Upper lobe of right lung (tissue), 1 donor: ENCODE measurements at regions of chr2 and their contacts with region 1.

Region 1: DNA sequence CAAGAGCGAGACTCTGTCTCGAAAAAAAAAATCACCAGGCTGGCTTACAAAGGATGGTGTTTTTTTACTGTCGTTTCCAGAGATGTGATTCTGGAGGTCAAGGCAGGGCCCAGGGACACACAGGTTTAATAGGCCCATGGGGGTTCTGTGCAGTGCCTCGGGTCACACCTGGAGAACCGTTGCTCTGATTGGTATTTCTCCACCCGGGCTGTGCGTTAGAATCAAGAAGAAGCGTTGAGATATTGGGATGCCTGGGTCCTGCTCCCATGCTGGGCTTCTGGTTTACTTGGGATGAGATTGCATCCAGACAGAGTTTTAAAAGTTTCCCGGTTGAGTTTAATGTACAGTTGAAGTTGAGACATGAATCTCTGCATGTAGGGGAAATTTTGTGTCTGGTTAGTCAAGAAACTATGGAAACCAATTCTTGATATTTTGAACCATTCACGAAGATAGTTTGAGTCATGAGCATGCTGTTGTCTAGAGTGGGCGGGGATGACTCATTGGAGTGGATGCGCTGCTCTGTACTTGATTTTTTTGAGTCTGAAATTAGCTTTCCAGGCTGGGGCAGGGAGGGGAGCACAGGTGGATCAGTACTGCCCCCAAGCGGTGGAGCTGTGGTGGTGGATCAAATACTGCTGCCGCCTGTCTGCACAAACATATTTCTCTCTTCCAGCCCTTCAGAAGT is 50.1 kb downstream of the GREB1 start:
- DNase-seq: no peak
- ATAC-seq: peak; percentile 84
- H3K4me3 ChIP-seq: no peak overlapping the region
- H3K27ac ChIP-seq: no peak overlapping the region
- H3K4me1 ChIP-seq: no peaks in the 10 kb centered on the region
- H3K27me3 ChIP-seq: no peaks in the 10 kb centered on the region
- CTCF ChIP-seq: peak; percentile 80

Region 2: DNA sequence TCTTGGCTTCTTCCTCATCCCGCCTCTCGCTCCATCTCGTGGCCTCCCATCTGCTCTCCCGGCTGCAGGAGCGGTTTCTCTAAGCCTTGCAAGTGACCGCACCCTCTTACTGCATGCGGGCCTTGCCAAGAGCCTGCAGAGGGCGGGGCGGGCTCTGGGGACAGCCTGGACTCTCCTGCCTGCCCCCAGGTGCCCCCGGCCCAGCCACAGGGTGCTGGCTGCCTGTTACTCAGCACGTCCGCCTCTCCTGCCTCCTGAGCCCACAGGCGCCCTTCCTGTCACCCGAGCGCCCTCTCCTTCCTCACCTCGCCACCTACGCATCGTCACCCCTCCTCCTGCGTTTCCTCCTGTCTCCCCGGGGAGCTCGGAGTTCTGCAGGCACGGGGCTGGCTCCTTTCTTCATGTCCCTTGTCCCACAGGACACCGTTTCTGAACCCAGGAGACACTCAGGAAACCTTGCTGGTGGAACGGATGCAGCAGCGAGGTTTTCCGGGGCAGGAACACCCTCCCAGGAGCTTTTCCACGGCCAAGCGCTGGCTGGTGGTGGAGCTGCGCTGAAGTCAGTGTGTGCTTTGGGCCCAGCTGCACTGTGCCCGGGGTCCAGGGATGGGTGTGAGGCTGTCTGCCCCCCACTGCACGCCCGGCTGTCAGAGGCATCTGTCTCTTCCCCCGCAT is 1252.8 kb before region 1 on chr2:
- intact Hi-C with region 1: no loop called
- DNase-seq: peak; percentile 92
- ATAC-seq: peak; percentile 83
- H3K4me3 ChIP-seq: peak overlapping the region; percentile 37
- H3K27ac ChIP-seq: peak overlapping the region; percentile 74
- H3K4me1 ChIP-seq: peaks cover 69% of the 10 kb centered on the region
- H3K27me3 ChIP-seq: no peaks in the 10 kb centered on the region
- CTCF ChIP-seq: no peak

Region 3: GRCh38 chr2:11073251-11073650 is 510.7 kb before region 1 on chr2:
- intact Hi-C with region 1: no loop called
- DNase-seq: peak; percentile 70
- ATAC-seq: peak; percentile 66
- H3K4me3 ChIP-seq: no peak overlapping the region
- H3K27ac ChIP-seq: no peak overlapping the region
- H3K4me1 ChIP-seq: no peaks in the 10 kb centered on the region
- H3K27me3 ChIP-seq: no peaks in the 10 kb centered on the region
- CTCF ChIP-seq: peak; percentile 45

Region 4: DNA sequence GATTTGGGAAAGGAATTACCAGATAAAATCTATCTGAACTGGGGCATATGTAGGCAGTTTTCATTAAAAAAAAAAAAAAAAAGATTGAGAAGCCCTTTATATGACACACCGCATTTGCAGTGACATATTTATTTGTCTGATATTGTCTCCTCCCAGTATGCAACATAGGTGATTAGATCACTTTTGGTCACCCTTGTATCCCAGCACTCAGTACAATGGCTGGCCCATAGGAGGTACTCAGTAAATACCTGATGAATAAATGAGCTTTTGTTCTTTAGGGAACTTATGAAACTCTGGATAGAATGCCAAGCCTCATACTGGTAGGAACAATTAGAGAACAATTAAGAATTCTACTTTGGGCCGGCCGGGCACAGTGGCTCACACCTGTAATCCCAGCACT is 95.2 kb before region 1 on chr2:
- intact Hi-C with region 1: loop called (anchors 5 kb)
- DNase-seq: no peak
- ATAC-seq: no peak
- H3K4me3 ChIP-seq: no peak overlapping the region
- H3K27ac ChIP-seq: no peak overlapping the region
- H3K4me1 ChIP-seq: no peaks in the 10 kb centered on the region
- H3K27me3 ChIP-seq: peaks cover 40% of the 10 kb centered on the region
- CTCF ChIP-seq: no peak

Region 5: GRCh38 chr2:12091201-12091806 is 507.3 kb after region 1 on chr2:
- intact Hi-C with region 1: no loop called
- DNase-seq: no peak
- ATAC-seq: no peak
- H3K4me3 ChIP-seq: no peak overlapping the region
- H3K27ac ChIP-seq: no peak overlapping the region
- H3K4me1 ChIP-seq: no peaks in the 10 kb centered on the region
- H3K27me3 ChIP-seq: no peaks in the 10 kb centered on the region
- CTCF ChIP-seq: no peak